B cell (primary cell): ENCODE measurements at regions of chr10 and their contacts with region 1.

Region 1: DNA sequence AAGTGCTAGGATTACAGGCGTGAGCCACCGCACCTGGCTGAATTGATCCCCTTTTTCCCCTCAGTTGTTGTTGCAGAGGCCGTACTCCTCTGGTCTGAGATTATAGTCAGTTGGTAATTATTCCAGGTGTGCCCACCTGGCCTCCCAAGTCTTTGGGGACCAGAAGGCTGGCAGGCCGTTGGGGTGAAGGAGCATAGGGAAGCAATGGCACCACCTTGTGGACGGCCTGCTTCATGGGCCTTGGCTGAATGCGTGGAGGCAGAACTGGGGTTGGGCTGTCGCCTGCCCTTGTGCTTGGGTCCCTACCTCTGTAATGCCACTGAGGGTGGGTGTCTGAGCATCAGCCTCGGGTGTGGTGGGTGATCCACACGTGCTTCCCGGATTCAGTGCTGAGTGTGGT is 125.7 kb downstream of the RGS10 start:
- DNase-seq: peak; percentile 83
- ATAC-seq: peak; percentile 90
- H3K4me3 ChIP-seq: no peak overlapping the region
- H3K4me3 Mint-ChIP-seq: no peak overlapping the region
- H3K27ac ChIP-seq: no peak overlapping the region
- H3K27ac Mint-ChIP-seq: peak overlapping the region; percentile 62
- H3K4me1 ChIP-seq: peaks cover 0 to 8% of the 10 kb centered on the region in 2 donors
- H3K4me1 Mint-ChIP-seq: peaks cover 6% of the 10 kb centered on the region
- H3K27me3 ChIP-seq: no peaks in the 10 kb centered on the region
- H3K27me3 Mint-ChIP-seq: no peaks in the 10 kb centered on the region
- CTCF ChIP-seq: peak; percentile 88

Region 2: GRCh38 chr10:119199231-119199992 is 217.4 kb before region 1 on chr10:
- CTCF ChIA-PET with region 1: interaction called, 106 read pairs
- POLR2A ChIA-PET with region 1: interaction called, 3 read pairs
- intact Hi-C with region 1: loop called (anchors 2 kb)
- DNase-seq: peak; percentile 68
- ATAC-seq: peak; percentile 84
- H3K4me3 ChIP-seq: no peak overlapping the region
- H3K4me3 Mint-ChIP-seq: no peak overlapping the region
- H3K27ac ChIP-seq: no peak overlapping the region
- H3K27ac Mint-ChIP-seq: no peak overlapping the region
- H3K4me1 ChIP-seq: peaks cover 0 to 3% of the 10 kb centered on the region in 2 donors
- H3K4me1 Mint-ChIP-seq: peaks cover 4% of the 10 kb centered on the region
- H3K27me3 ChIP-seq: peaks cover 0 to 8% (median 6%) of the 10 kb centered on the region in 4 experiments
- H3K27me3 Mint-ChIP-seq: peaks cover 9% of the 10 kb centered on the region
- CTCF ChIP-seq: peak; percentile 52

Region 3: DNA sequence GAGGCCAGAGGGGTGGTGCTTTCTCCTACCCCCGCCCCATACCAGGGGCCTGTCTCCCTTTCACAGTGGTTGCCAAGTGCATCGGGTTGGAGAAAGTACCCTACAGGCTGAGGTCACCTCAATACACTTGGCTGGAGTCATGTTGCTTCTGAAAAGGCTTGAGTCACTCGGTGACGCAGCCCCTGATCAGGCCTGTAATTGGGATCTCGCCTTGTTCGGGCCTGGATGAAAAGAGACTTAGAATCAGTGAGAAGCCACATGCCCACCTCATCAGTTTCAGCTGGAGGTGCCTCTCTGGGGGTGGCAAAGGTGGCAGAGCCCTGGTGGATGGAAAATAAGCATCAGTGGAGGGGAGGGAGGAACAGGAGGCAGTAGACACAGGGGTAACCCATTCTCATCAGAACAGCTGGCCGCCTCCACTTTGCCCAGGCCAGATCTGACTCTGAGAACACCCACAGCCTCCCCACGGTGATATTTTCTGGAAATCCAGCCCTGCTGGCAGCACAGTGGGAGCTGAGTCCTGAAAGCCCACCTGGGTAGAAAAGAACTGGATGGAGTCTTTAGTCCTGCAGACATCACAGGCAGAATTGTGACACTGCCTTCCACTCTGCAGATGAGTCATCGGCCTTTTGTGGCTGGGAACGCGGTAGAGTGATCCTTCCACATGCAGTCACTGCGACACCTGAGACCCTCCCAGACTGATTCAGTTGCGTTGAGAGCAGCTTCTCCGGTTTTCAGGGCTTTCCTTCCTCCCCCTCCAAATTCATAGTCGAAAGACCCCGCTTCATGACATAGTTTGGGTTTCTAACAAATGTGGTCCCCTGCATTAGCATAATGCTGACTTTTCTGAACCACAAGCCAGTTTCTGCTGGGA is 101.5 kb before region 1 on chr10:
- CTCF ChIA-PET with region 1: interaction called, 3 read pairs
- POLR2A ChIA-PET with region 1: no interaction called
- intact Hi-C with region 1: loop called (anchors 2 kb)
- DNase-seq: no peak
- ATAC-seq: peak; percentile 32
- H3K4me3 ChIP-seq: no peak overlapping the region
- H3K4me3 Mint-ChIP-seq: peak overlapping the region; percentile 62
- H3K27ac ChIP-seq: no peak overlapping the region
- H3K27ac Mint-ChIP-seq: peak overlapping the region; percentile 89
- H3K4me1 ChIP-seq: peaks cover 66 to 86% of the 10 kb centered on the region in 2 donors
- H3K4me1 Mint-ChIP-seq: peaks cover 91% of the 10 kb centered on the region
- H3K27me3 ChIP-seq: no peaks in the 10 kb centered on the region
- H3K27me3 Mint-ChIP-seq: no peaks in the 10 kb centered on the region
- CTCF ChIP-seq: no peak

Region 4: DNA sequence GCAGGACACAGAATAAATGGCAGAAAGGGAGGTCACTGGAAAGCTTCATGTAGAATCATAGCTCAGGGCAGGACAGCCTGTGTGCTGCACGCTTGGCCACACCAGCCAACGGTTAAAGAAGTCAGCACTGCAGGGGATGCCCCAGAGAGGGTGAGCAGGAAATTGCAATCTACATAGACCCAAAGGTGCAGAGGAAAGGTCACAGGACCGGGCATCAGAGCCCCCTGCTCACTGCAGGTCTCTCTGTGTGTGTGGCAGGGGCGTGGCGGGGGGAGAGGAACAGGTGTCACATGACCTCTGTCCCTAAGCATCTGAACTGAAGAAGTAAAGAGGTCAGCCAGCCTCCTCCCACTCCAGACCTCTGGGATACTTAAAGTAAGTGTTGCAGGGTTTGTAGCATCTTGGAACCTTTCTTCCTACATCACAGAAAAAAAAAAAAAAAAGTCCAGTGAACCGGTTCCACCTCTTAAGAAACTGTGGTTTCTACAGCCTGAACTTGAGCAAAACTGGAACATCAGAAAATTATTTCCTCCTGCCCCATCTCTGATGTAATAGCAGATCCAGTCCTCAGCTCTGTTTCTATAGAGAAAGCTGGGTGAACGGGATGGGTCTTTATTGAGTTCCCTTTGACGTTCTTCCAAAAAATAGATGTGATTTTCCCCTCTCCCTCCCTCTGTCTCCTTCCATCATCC is 61.4 kb after region 1 on chr10:
- CTCF ChIA-PET with region 1: no interaction called
- POLR2A ChIA-PET with region 1: no interaction called
- intact Hi-C with region 1: no loop called
- DNase-seq: peak; percentile 77
- ATAC-seq: peak; percentile 95
- H3K4me3 ChIP-seq: peak overlapping the region in 2 of 5 experiments; percentile 5 to 42
- H3K4me3 Mint-ChIP-seq: peak overlapping the region; percentile 87
- H3K27ac ChIP-seq: peak overlapping the region; percentile 47 to 62
- H3K27ac Mint-ChIP-seq: peak overlapping the region; percentile 81
- H3K4me1 ChIP-seq: peaks cover 27 to 31% of the 10 kb centered on the region in 2 donors
- H3K4me1 Mint-ChIP-seq: peaks cover 37% of the 10 kb centered on the region
- H3K27me3 ChIP-seq: no peaks in the 10 kb centered on the region
- H3K27me3 Mint-ChIP-seq: no peaks in the 10 kb centered on the region
- CTCF ChIP-seq: no peak

Region 5: DNA sequence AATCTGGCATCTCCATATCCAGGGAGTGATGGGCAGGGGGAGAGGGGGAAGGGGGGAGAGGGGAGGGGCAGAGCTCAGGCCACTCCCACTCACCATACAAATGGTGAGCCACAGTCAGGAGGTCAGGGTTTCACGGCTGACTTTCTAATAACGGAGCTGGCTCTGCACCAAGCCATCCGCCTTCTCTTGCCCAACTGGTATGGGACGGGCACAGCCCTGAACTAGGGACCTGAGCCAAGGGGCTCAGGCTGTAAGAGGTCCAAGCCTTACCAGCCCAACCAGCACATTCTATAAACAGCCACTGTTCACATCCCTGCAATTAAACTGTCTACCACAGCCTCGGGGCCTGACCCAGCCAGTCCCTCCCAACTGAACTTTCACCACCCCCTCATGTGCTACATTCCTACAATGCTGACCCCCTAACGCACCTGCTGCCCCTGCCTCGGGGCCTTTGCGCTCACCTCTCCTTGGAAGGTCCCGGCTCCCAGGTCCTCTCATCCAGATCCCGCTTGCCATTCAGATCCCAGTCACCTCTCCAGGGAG is 93.1 kb after region 1 on chr10:
- CTCF ChIA-PET with region 1: no interaction called
- POLR2A ChIA-PET with region 1: no interaction called
- intact Hi-C with region 1: no loop called
- DNase-seq: no peak
- ATAC-seq: no peak
- H3K4me3 ChIP-seq: no peak overlapping the region
- H3K4me3 Mint-ChIP-seq: no peak overlapping the region
- H3K27ac ChIP-seq: no peak overlapping the region
- H3K27ac Mint-ChIP-seq: no peak overlapping the region
- H3K4me1 ChIP-seq: no peaks in the 10 kb centered on the region
- H3K4me1 Mint-ChIP-seq: no peaks in the 10 kb centered on the region
- H3K27me3 ChIP-seq: no peaks in the 10 kb centered on the region
- H3K27me3 Mint-ChIP-seq: no peaks in the 10 kb centered on the region
- CTCF ChIP-seq: no peak

Region 6: GRCh38 chr10:119616882-119617570 is 200.2 kb after region 1 on chr10:
- CTCF ChIA-PET with region 1: no interaction called
- POLR2A ChIA-PET with region 1: no interaction called
- intact Hi-C with region 1: no loop called
- DNase-seq: no peak
- ATAC-seq: no peak
- H3K4me3 ChIP-seq: no peak overlapping the region
- H3K4me3 Mint-ChIP-seq: no peak overlapping the region
- H3K27ac ChIP-seq: no peak overlapping the region
- H3K27ac Mint-ChIP-seq: no peak overlapping the region
- H3K4me1 ChIP-seq: no peaks in the 10 kb centered on the region
- H3K4me1 Mint-ChIP-seq: peaks cover 2% of the 10 kb centered on the region
- H3K27me3 ChIP-seq: no peaks in the 10 kb centered on the region
- H3K27me3 Mint-ChIP-seq: no peaks in the 10 kb centered on the region
- CTCF ChIP-seq: no peak

Region 7: GRCh38 chr10:120805014-120805812 is 1388.4 kb after region 1 on chr10:
- CTCF ChIA-PET with region 1: no interaction called
- POLR2A ChIA-PET with region 1: no interaction called
- intact Hi-C with region 1: no loop called
- DNase-seq: no peak
- ATAC-seq: no peak
- H3K4me3 ChIP-seq: no peak overlapping the region
- H3K4me3 Mint-ChIP-seq: no peak overlapping the region
- H3K27ac ChIP-seq: no peak overlapping the region
- H3K27ac Mint-ChIP-seq: no peak overlapping the region
- H3K4me1 ChIP-seq: no peaks in the 10 kb centered on the region
- H3K4me1 Mint-ChIP-seq: no peaks in the 10 kb centered on the region
- H3K27me3 ChIP-seq: no peaks in the 10 kb centered on the region
- H3K27me3 Mint-ChIP-seq: no peaks in the 10 kb centered on the region
- CTCF ChIP-seq: no peak